Panc1 (cell line): ENCODE measurements at regions of chr5 and their contacts with region 1.

Region 1: DNA sequence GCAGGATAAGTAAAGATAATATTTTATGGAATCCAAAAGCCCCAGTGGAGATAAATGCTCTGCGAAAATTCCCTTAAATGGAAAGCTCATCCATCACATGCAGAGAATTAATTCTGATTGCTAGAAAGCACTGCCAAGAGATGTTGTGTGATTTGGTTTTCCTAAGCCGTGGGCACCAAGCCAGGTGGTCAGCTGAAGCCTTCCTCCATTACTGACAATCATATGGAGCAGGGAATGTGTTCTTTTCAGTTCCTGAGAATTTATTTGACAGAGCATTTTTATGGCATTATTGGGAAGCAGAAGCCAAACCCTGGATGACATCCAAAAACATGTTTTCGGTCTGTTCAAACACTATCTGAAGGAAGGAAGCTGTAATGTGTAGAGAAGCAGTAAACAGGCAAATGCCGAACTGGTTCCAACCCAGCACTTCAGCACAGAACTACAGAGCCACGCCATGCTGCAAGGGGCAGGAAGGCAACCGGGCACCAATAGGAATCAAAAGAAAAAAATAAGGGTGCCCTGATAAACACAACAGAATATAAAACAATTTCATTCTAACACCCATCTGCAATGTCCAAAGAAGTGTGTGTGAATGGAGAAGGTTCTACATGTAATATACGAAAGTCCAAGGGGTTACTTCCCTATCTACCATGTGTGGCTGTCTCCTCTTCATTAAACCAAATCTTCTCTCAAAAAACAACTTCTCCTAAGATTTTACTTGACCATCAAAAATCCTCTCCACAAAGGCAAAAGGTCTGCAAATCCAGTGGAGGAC is 12.3 kb downstream of the ARSB start:
- DNase-seq: no peak
- ATAC-seq: no peak
- H3K4me3 ChIP-seq: no peak overlapping the region
- H3K27ac ChIP-seq: no peak overlapping the region
- H3K4me1 ChIP-seq: no peaks in the 10 kb centered on the region
- H3K27me3 ChIP-seq: no peaks in the 10 kb centered on the region
- CTCF ChIP-seq: no peak

Region 2: GRCh38 chr5:78731884-78732283 is 241.0 kb before region 1 on chr5:
- CTCF ChIA-PET with region 1: no interaction called
- POLR2A ChIA-PET with region 1: interaction called, 14 read pairs
- in situ Hi-C with region 1: no loop called
- intact Hi-C with region 1: no loop called
- DNase-seq: no peak
- ATAC-seq: no peak
- H3K4me3 ChIP-seq: no peak overlapping the region
- H3K27ac ChIP-seq: no peak overlapping the region
- H3K4me1 ChIP-seq: no peaks in the 10 kb centered on the region
- H3K27me3 ChIP-seq: no peaks in the 10 kb centered on the region; the same call in 1 of the 2 replicates
- CTCF ChIP-seq: no peak

Region 3: GRCh38 chr5:78779771-78780616 is 192.8 kb before region 1 on chr5:
- CTCF ChIA-PET with region 1: no interaction called
- POLR2A ChIA-PET with region 1: no interaction called
- in situ Hi-C with region 1: no loop called
- intact Hi-C with region 1: no loop called
- DNase-seq: no peak
- ATAC-seq: no peak
- H3K4me3 ChIP-seq: no peak overlapping the region
- H3K27ac ChIP-seq: no peak overlapping the region
- H3K4me1 ChIP-seq: no peaks in the 10 kb centered on the region; the same call in 1 of the 2 replicates
- H3K27me3 ChIP-seq: no peaks in the 10 kb centered on the region
- CTCF ChIP-seq: no peak

Region 4: GRCh38 chr5:78813906-78814530 is 158.8 kb before region 1 on chr5:
- CTCF ChIA-PET with region 1: no interaction called
- POLR2A ChIA-PET with region 1: no interaction called
- in situ Hi-C with region 1: no loop called
- intact Hi-C with region 1: no loop called
- DNase-seq: no peak
- ATAC-seq: no peak
- H3K4me3 ChIP-seq: no peak overlapping the region
- H3K27ac ChIP-seq: no peak overlapping the region
- H3K4me1 ChIP-seq: no peaks in the 10 kb centered on the region
- H3K27me3 ChIP-seq: no peaks in the 10 kb centered on the region
- CTCF ChIP-seq: no peak